ENCODE measurements at regions of chr17 and their contacts with region 1.

Region 1: DNA sequence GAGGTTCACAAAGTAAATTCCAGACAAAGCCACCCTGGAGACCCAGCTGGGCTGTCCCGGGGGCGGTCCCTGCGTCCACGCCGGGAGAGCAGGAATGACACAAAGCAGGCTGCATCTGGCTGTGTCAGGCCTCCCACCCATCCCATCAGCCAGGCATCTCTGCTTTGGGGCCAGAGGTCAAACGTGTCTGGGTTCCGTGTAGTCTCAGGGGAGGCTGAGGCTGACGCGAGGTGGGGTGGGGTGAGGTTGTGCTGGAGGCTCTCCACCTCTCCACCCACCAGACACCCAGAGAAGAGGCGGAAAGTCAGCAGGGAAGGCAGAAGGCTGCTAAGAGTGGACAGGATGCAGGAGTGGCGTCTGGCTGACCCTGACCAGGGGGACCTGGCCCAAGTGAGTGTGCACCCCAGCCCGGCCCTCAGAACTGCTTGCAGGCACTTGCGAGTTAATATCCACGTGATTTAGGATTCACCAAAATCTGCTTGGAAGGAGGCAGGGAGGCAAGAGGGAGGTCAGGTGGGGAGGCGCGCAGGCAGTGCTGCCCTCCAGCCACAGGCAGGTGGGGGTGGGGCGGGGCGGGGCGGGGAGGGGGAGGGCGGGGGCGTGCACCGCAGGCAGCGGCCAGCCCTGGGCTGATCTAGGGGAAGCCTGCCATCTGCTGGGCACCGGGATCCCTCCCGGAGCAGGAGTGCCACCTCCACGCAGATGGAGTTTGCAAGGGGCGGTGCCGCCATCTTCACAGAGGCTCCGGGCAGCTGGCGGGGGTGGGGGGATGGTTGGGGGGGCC is 44.3 kb downstream of the TBC1D16 start:
- DNase-seq: peak; percentile 95
- H3K4me3 ChIP-seq: peak overlapping the region; percentile 50 to 57 (median 54)
- H3K27ac ChIP-seq: peak overlapping the region in 1 of 4 donors; percentile 42
- H3K4me1 ChIP-seq: peaks cover 28 to 53% (median 52%) of the 10 kb centered on the region in 4 donors
- H3K27me3 ChIP-seq: no peaks in the 10 kb centered on the region
- CTCF ChIP-seq: peak in 2 of 3 experiments; percentile 73 to 75
- EP300 ChIP-seq: no peak
- POLR2A ChIP-seq: no peak

Region 2: GRCh38 chr17:79741751-79742588 is 249.4 kb before region 1 on chr17:
- intact Hi-C with region 1: loop called (anchors 2 kb)
- DNase-seq: no peak
- H3K4me3 ChIP-seq: peak overlapping the region in 2 of 4 donors; percentile 4 to 25
- H3K27ac ChIP-seq: no peak overlapping the region
- H3K4me1 ChIP-seq: peaks cover 9 to 13% (median 13%) of the 10 kb centered on the region in 4 donors
- H3K27me3 ChIP-seq: peaks cover 0 to 80% (median 27%) of the 10 kb centered on the region in 4 donors
- CTCF ChIP-seq: peak; percentile 77 to 100 (median 82)
- EP300 ChIP-seq: no peak
- POLR2A ChIP-seq: no peak

Region 3: DNA sequence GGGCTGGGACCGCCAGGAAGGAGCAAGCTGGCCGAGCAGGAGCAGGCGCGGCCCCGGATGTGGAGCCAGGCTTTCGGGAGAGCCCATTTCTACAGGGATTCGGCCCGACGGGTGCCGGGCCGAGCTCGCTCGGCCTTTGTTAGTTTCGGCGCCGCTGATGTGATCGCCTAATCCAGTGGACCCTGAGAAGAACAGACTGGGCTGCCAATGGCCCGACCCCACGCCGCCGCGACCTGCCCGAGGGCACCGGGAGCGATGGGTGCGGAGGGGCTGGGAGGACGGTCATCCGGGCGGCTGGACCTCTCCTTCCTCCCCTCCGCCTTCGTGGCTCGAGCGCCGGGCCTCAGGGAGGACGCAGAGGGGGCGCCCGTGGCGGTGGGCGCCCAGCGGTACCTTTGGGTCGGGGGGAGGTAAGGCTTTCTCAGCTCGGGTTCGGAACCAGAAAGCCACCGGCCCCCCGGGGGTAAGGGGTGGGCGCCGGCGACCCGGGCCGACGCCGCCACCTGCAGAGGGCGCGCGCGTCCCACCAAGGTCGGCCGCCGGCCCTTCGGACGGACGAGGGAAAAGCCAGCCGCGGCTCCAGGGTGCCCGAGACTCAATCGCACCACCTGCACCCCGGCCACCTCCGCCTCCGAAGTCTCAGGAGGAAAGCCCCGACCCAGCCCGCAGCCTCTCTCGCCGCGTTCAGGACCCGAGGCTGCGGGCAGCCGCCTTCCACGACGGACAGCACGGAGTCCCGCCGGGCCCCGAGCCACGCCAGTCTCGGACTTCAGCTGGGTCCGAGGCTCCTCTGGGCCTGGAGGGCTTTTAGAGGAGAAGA is 201.6 kb before region 1 on chr17:
- intact Hi-C with region 1: loop called (anchors 2 kb)
- DNase-seq: no peak
- H3K4me3 ChIP-seq: peak overlapping the region in 3 of 4 donors; percentile 21 to 40 (median 30)
- H3K27ac ChIP-seq: no peak overlapping the region
- H3K4me1 ChIP-seq: peaks cover 29 to 56% (median 53%) of the 10 kb centered on the region in 4 donors
- H3K27me3 ChIP-seq: peaks cover 35 to 99% (median 52%) of the 10 kb centered on the region in 4 donors
- CTCF ChIP-seq: peak; percentile 79 to 91 (median 86)
- EP300 ChIP-seq: no peak
- POLR2A ChIP-seq: no peak

Region 4: DNA sequence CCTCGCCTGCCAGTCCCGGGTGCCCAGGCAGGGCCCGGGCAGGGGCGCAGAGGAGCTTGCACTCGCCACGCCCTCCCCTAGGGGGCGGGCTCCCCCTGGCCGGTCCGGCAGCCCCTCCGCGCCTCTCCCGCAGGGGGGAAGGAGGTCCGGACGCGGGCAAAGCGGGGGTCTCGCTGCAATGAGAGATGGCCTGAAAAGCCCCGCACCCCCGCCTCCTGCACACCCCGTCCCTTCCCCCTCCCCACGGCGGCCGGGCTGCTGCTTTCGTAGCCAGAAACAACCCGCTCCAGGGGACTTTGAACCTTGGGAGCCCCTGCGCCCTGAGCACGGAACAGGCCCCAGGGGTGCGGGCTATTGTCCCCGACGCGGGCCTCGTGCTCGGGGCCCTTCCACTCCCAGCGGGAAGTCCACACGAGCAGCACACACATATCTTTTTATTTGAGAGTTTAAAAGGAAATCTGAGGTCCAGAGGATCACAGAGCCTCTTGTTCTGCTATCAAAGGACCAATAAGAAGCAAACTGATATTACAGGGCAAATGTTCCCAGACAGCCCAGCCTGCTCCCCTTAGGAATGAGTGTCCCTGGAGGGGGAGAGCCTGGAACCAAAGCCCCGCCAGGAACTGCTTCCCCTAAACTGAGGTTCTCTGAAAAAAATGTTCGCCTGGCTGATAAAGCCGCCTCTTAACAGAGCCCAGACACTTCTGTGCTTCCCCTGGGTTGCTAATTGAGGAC is 146.3 kb before region 1 on chr17:
- intact Hi-C with region 1: loop called (anchors 2 kb)
- DNase-seq: no peak
- H3K4me3 ChIP-seq: peak overlapping the region; percentile 55 to 73 (median 60)
- H3K27ac ChIP-seq: peak overlapping the region; percentile 19 to 64 (median 55)
- H3K4me1 ChIP-seq: peaks cover 45 to 55% (median 53%) of the 10 kb centered on the region in 4 donors
- H3K27me3 ChIP-seq: peaks cover 19 to 52% (median 37%) of the 10 kb centered on the region in 4 donors
- CTCF ChIP-seq: peak; percentile 58 to 83 (median 69)
- EP300 ChIP-seq: no peak
- POLR2A ChIP-seq: no peak